Astrocyte of the cerebellum (primary cell): ENCODE measurements at regions of chr18 and their contacts with region 1.

Region 1: DNA sequence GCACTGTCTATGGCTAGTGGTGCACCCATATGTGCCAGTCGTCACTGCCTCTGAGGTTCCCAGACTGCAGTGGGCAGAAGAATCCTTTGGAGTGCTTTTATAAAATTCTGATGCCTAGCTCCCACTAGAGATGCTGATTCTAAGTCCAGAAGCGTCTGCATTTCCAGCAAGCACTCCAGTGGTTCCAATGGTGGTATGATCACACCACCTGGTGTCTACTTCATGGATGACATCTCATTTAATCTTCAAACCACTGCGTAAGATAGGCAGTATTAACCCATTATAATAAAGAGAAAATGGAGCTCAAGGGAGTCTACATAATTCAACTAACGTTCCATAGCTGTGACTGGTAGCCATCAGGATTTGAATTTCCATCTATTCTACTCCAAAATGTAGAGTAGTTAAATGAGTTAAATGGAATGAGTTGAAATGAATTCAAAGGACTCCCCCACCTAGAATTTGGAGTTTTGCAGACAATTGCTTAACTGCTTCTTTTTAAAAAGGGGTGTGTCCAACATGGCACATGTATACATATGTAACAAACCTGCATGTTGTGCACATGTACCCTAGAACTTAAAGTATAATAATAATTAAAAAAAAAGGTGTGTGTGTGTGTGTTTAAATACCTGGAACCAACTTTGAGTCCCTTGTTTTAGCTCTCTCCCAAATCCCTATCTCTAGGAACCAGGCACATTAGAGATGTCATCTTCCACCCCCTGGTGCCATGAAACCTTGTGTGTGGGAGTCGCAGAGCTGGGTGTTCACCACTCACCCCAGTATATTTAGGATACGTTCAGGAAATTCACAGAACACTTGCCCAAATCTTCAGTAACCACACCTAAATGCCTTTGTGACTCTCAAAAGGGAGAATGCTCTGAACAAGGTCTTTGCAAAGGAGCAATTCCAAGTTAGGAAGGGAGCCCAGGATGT is 14.1 kb downstream of the LAMA3 start:
- DNase-seq: no peak
- H3K4me3 ChIP-seq: no peak overlapping the region
- CTCF ChIP-seq: peak; percentile 54

Region 2: GRCh38 chr18:23619388-23619881 is 83.9 kb before region 1 on chr18:
- in situ Hi-C with region 1: no loop called
- DNase-seq: no peak
- H3K4me3 ChIP-seq: peak overlapping the region; percentile 41
- CTCF ChIP-seq: no peak

Region 3: GRCh38 chr18:23650968-23651927 is 52.1 kb before region 1 on chr18:
- in situ Hi-C with region 1: loop called (anchors 5 kb)
- DNase-seq: peak; percentile 66
- H3K4me3 ChIP-seq: no peak overlapping the region
- CTCF ChIP-seq: no peak